ENCODE measurements at regions of chr11 and their contacts with region 1.

Region 1: DNA sequence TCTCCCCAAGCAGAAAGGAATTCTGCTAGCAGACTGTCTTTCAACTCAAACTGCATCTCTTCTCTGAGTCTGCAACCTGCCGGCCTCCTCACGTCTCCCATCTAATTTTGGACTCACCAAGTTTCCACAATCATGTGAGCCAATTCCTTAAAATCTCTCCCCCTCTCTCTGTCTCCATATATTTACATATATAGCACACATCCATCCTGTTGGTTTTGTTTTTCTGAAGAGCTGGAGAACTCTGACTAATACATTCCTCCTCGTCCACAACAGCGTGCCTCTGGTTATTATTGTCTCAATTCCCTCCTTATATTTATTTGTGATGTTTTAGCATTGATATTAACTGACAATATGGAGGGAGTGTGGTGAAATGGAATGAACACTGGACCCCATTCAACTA is 29.6 kb upstream of the FJX1 start:
- DNase-seq: no peak
- H3K4me3 ChIP-seq: no peak overlapping the region
- H3K27ac ChIP-seq: no peak overlapping the region
- H3K4me1 ChIP-seq: no peaks in the 10 kb centered on the region
- H3K27me3 ChIP-seq: no peaks in the 10 kb centered on the region
- CTCF ChIP-seq: no peak
- POLR2A ChIP-seq: no peak

Region 2: DNA sequence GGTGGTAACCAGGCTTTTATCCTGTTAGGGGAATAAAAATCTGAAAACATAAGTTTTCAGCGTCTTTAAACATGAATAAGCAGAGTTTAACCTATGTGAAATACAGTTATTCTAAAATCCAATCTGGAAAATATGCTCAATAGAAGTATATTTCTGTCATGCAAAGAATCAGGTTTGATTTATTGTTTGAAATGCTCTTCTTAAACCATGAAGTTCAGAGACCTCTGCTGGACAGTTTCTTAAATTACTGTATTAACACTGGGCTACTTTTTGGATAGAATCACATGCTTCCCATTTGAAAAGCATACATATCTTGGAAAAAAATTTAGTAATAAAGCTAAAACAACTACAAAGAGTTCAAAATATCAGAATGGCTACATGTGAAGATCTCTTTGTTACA is 697.8 kb before region 1 on chr11:
- intact Hi-C with region 1: no loop called
- DNase-seq: no peak
- H3K4me3 ChIP-seq: no peak overlapping the region
- H3K27ac ChIP-seq: no peak overlapping the region
- H3K4me1 ChIP-seq: no peaks in the 10 kb centered on the region
- H3K27me3 ChIP-seq: no peaks in the 10 kb centered on the region
- CTCF ChIP-seq: peak; percentile 4 to 39 (median 20)
- POLR2A ChIP-seq: no peak

Region 3: GRCh38 chr11:35330931-35331330 is 257.7 kb before region 1 on chr11:
- intact Hi-C with region 1: no loop called
- DNase-seq: no peak
- H3K4me3 ChIP-seq: no peak overlapping the region
- H3K27ac ChIP-seq: no peak overlapping the region
- H3K4me1 ChIP-seq: peaks cover 8% of the 10 kb centered on the region
- H3K27me3 ChIP-seq: no peaks in the 10 kb centered on the region
- CTCF ChIP-seq: no peak
- POLR2A ChIP-seq: no peak

Region 4: DNA sequence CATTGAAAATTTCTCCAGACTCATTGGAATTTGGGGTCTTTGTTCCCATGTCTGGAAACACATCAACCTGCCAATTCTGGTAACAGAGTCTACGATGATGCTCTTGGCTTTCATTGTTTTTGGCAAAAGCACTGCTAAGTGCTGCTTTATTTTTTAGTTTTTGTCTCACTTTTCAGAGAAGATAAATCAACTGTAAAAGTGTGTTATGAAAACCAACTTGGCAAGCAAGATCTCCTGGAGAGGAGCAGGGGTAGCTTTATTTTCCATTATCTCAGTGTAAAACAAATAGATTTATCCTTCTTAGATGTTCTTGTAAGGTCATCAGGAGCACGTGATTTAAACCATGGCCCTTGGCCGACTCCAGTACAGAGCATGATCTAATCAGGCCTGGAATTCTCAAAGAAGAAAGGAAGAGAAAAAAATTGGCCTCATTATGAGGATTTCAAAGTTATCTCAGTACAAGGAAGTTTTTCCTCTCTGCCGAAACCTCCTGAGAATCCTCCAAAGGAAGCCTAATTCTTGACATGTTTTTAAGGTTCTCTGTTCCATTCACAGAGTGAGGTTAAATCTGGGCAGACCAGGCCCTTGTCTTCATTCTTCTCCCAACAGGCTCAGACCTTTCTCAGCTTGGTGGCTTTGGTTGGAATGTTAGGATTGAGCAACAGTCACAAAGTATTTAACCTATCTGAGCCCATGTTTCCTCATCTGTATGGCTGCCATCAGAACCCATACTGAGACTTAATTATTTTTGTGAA is 46.8 kb before region 1 on chr11:
- intact Hi-C with region 1: loop called (anchors 1 kb)
- DNase-seq: peak in 1 of 2 donors; percentile 87
- H3K4me3 ChIP-seq: no peak overlapping the region
- H3K27ac ChIP-seq: peak overlapping the region; percentile 70
- H3K4me1 ChIP-seq: peaks cover 29% of the 10 kb centered on the region
- H3K27me3 ChIP-seq: no peaks in the 10 kb centered on the region
- CTCF ChIP-seq: no peak
- POLR2A ChIP-seq: no peak

Measured in vagina (tissue), 2 donors.